Panc1 (cell line): ENCODE measurements at regions of chr6 and their contacts with region 1.

Region 1: GRCh38 chr6:53899512-53899911 is 104.7 kb downstream of the LRRC1 start:
- DNase-seq: no peak
- ATAC-seq: no peak
- H3K4me3 ChIP-seq: no peak overlapping the region
- H3K27ac ChIP-seq: no peak overlapping the region
- H3K4me1 ChIP-seq: no peaks in the 10 kb centered on the region; the same call in 1 of the 2 replicates
- H3K27me3 ChIP-seq: no peaks in the 10 kb centered on the region
- CTCF ChIP-seq: no peak

Region 2: GRCh38 chr6:53944543-53944942 is 45.0 kb after region 1 on chr6:
- CTCF ChIA-PET with region 1: no interaction called
- POLR2A ChIA-PET with region 1: interaction called, 10 read pairs
- in situ Hi-C with region 1: no loop called
- intact Hi-C with region 1: no loop called
- DNase-seq: no peak
- ATAC-seq: no peak
- H3K4me3 ChIP-seq: no peak overlapping the region
- H3K27ac ChIP-seq: no peak overlapping the region
- H3K4me1 ChIP-seq: no peaks in the 10 kb centered on the region
- H3K27me3 ChIP-seq: no peaks in the 10 kb centered on the region
- CTCF ChIP-seq: no peak